ENCODE measurements at regions of chr7 and their contacts with region 1.

Region 1: GRCh38 chr7:26151953-26152781 is at the start of gene NFE2L3:
- DNase-seq: peak; percentile 88
- ATAC-seq: peak; percentile 72
- H3K4me3 Mint-ChIP-seq: peak within 1 kb of the TSS; percentile 96
- H3K27ac Mint-ChIP-seq: peak within 1 kb of the TSS; percentile 99
- H3K4me1 Mint-ChIP-seq: peaks cover 51% of the 10 kb centered on the region
- H3K27me3 Mint-ChIP-seq: no peaks in the 10 kb centered on the region
- CTCF ChIP-seq: no peak
- total RNA-seq, gene NFE2L3: 21.5 to 22.6 TPM

Region 2: GRCh38 chr7:26167301-26167934 is 15.3 kb after region 1 on chr7:
- CTCF ChIA-PET with region 1: interaction called, 10 read pairs
- POLR2A ChIA-PET with region 1: interaction called, 33 read pairs
- intact Hi-C with region 1: no loop called
- DNase-seq: peak; percentile 70
- ATAC-seq: peak; percentile 85
- H3K4me3 Mint-ChIP-seq: peak overlapping the region; percentile 9
- H3K27ac Mint-ChIP-seq: peak overlapping the region; percentile 86
- H3K4me1 Mint-ChIP-seq: peaks cover 47% of the 10 kb centered on the region
- H3K27me3 Mint-ChIP-seq: no peaks in the 10 kb centered on the region
- CTCF ChIP-seq: no peak

Measured in activated CD8-positive, alpha-beta T cell treated with anti-CD3 and anti-CD28 coated beads for 36 hours (primary cell).